GM10248 (cell line): ENCODE measurements at regions of chr10 and their contacts with region 1.

Region 1: GRCh38 chr10:26334932-26335573 is 103.1 kb upstream of the APBB1IP start:
- DNase-seq: peak; percentile 67
- CTCF ChIP-seq: peak; percentile 77

Region 2: DNA sequence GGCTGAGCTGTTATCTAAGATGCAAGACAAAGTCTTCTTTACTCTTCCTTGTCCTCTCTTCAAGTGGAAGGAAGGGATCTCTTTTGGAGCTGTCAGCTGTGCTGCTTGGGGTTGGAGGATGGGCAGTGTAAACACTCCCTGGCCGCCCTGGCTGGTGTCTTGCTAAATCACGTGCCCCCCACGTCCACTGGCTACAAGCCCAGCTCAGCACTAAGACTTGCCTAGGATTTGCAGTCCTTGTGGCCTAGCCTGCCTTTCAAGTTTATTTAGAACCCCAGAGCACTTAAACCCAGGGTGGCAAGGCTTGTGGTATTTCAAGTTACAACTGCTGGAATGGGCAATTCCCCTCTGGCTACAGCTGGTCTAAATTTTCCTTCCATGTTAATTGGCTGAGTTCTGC is 673.4 kb before region 1 on chr10:
- CTCF ChIA-PET with region 1: no interaction called
- POLR2A ChIA-PET with region 1: no interaction called
- DNase-seq: no peak
- CTCF ChIP-seq: no peak

Region 3: GRCh38 chr10:26211781-26212444 is 123.1 kb before region 1 on chr10:
- CTCF ChIA-PET with region 1: no interaction called
- POLR2A ChIA-PET with region 1: no interaction called
- DNase-seq: no peak
- CTCF ChIP-seq: no peak

Region 4: DNA sequence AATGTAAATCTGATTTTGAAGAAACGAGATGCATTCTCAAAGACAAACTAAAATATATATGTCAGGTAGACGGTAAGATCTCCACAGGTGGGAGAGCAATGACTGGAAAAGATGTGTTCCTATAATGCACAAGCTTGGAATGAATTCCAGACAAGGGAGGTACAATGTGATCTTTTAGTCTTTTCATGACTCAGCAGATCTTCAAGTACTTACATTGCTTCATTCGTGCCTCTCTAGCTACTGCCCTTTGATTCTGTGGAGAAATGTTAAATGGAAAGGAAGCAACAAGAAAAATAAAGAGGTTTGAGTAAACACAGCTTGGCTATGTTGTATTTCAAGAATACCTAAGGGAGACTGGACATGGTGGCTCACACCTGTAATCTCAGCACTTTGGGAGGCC is 11.8 kb before region 1 on chr10:
- CTCF ChIA-PET with region 1: interaction called, 15 read pairs
- POLR2A ChIA-PET with region 1: no interaction called
- DNase-seq: no peak
- CTCF ChIP-seq: no peak

Region 5: DNA sequence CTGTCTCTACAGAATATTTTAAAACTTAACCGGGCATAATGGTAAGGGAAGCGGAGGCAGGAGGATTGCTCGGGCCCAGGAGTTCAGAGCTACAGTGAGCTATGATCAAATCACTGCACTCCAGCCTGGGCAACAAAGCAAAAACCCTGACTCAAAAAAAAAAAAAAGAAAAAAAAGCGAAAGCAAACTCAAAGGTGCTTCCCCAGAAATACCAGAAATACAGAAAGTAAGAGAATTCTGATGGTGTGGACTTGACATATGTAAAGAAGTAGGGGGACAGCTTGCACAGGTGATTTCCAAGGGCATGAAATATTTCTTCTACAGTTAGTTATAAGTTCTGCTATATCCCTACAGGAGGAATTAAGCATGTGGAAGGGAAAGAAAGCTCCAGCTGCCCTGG is 33.4 kb after region 1 on chr10:
- CTCF ChIA-PET with region 1: no interaction called
- POLR2A ChIA-PET with region 1: no interaction called
- DNase-seq: peak; percentile 29
- CTCF ChIP-seq: no peak

Region 6: DNA sequence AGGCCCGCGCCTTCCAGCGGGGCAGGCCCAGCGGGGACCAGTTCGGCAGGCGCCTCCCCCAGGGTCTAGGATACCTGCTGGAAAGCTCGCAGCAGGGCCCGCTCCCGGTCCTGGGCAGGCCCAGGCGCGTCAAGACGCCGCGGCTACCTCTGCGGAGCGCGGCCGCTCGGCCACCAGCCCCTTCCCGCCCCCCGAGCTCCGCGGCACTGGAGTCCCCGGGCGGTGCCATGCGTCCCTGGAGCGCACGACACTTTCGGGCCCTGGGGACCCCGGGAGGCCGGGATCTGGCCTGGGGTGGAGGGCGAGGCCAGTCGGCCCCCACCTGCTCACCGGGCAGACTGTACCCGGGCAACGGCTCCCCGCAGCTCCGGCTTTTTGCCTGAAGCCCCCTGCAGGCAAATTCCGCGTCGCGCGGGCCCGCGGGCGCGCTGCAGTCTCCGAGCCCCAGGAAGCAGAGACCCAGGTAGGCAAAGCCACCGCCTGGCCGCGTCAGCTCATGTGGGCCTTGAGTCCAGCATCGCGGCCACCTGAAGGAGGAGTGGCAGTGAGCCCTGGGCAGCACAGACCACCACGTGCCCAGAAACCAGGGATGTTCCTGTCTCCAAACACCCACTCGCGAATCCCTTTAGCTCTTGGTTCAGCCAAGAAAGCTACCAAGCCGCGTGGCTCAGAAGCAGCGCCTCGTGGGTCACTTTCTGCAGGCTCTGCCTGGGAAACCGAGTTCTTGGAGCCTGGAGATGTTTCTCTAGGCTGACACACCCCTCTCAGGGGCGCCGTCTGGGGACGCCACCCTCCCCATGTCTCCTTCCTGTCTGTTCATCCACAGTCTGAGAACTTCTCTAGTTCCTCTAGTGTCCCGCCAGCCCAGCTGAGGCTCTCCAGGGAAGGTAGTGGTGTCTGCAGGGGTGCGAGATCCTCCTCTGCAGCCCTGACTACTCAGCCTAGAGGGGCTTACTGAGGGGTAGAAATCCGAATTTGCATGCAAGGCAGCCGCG is 56.9 kb after region 1 on chr10:
- CTCF ChIA-PET with region 1: interaction called, 14 read pairs
- POLR2A ChIA-PET with region 1: no interaction called
- DNase-seq: peak; percentile 20
- CTCF ChIP-seq: no peak

Region 7: GRCh38 chr10:26457088-26457487 is 122.0 kb after region 1 on chr10:
- CTCF ChIA-PET with region 1: no interaction called
- POLR2A ChIA-PET with region 1: no interaction called
- DNase-seq: peak; percentile 64
- CTCF ChIP-seq: no peak

Region 8: GRCh38 chr10:26556748-26557640 is 221.9 kb after region 1 on chr10:
- CTCF ChIA-PET with region 1: interaction called, 55 read pairs
- POLR2A ChIA-PET with region 1: no interaction called
- DNase-seq: peak; percentile 55
- CTCF ChIP-seq: peak; percentile 84